Endothelial cell of umbilical vein (primary cell): ENCODE measurements at regions of chr13 and their contacts with region 1.

Region 1: DNA sequence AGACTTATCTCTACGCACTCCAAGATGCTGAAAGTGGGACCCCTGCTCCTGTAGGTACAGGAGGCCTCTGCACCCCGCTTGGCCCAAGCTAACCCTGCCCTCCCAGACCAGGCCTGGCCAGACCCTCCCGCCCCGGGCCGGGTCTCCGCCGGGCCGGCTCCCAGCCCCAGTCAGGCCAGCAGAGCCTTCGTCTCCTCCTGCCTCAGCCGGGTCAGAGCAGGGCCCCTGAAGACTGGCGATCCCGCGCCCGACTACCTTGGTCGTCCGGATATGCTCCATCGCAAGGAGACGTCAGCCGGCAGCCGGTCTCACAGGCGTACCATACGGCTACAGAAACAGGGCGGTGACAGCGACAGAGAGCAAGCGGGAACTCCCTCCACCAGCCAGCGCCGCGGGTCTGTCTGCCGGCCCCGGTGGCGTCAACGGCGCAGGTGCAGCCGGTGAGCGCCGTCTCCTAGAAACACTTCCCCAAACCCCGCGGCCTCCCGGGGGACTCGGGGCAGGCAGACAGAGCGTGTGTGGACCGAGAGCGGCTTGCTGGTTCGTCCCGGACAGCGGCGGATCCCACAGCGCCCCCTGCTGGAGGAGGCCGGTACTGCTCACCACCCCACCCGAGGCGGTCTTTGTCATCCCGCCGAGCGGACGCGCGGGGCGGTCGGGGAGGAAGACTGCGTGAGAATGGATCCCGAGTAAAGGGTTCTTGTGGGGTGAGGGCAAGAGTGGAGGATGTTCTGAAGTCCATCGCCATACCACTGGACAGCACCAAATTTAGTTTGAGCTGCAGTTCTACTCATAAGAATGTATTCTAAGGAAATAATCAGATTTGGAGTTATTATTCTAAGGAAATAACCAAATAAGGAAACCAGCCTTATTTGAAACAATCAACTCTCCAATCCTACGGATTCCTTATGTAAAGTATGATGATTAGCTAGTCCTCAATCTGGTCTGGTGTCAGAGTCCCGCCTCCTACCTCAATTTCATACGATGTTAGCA is at the start of gene MTMR6:
- DNase-seq: peak; percentile 95
- H3K4me3 ChIP-seq: peak within 1 kb of the TSS; percentile 88 to 91 (median 89)
- H3K27ac ChIP-seq: peak within 1 kb of the TSS; percentile 92
- H3K4me1 ChIP-seq: peaks cover 11% of the 10 kb centered on the region
- H3K27me3 ChIP-seq: peaks cover 21 to 26% of the 10 kb centered on the region in 2 experiments
- CTCF ChIP-seq: peak; percentile 100
- POLR2A ChIP-seq: peak; percentile 45
- total RNA-seq, gene MTMR6: 20.9 and 21.7 TPM in 2 replicates

Region 2: DNA sequence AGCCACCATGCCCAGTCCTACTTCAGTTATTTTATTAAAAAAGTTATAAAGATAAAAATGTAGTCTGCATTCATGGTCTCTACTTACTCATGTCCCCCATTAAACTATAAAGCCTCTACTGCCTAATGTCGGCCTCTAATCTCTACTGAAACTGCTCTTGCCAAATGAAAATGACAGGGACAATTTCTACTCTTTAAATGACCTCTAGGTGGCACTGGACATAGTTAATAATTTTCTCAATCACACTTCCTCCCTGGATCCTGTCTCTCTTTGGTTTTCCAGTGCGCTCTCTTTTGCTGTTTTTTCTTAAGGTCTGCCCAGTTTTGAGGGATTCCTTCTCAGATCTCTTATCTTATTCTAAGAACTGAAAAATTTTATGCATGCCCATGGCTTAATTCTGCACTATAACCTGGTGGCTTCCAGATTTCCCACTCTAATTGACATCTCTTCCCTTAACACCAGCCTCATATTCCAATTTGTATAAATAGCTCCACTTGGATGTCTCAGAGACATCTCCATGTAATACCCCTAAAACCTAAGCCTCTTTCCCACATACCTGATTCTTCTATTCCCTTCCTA is 54.2 kb before region 1 on chr13:
- CTCF ChIA-PET with region 1: interaction called, 3 read pairs
- POLR2A ChIA-PET with region 1: no interaction called
- dilution Hi-C with region 1: no loop called
- intact Hi-C with region 1: loop called (anchors 5 kb)
- DNase-seq: peak; percentile 39
- H3K4me3 ChIP-seq: no peak overlapping the region
- H3K27ac ChIP-seq: no peak overlapping the region
- H3K4me1 ChIP-seq: no peaks in the 10 kb centered on the region
- H3K27me3 ChIP-seq: peaks cover 0 to 2% of the 10 kb centered on the region in 2 experiments
- CTCF ChIP-seq: peak; percentile 32 to 43
- POLR2A ChIP-seq: no peak

Region 3: DNA sequence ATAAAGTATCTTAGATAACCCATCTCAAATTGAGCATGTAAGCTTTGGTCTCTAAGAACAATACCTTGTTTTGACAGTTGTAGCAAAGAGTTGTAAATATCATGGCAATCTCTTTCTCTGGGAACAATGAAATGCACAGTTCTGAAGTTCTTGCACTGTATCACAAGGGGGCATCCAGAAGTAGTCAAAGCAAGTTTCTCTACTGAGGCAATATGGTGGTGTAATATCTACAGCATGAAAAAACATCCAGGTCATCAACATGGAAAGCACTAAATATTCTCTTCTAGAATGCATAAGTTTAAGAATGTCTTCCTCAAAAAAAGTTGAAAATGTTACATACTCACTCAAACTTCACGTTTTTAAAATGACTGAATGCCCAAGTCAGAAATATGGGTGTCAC is 19.6 kb before region 1 on chr13:
- CTCF ChIA-PET with region 1: interaction called, 6 read pairs
- POLR2A ChIA-PET with region 1: no interaction called
- dilution Hi-C with region 1: no loop called
- intact Hi-C with region 1: loop called (anchors 1 kb)
- DNase-seq: peak; percentile 9
- H3K4me3 ChIP-seq: no peak overlapping the region
- H3K27ac ChIP-seq: no peak overlapping the region
- H3K4me1 ChIP-seq: no peaks in the 10 kb centered on the region
- H3K27me3 ChIP-seq: no peaks in the 10 kb centered on the region
- CTCF ChIP-seq: no peak
- POLR2A ChIP-seq: no peak

Region 4: DNA sequence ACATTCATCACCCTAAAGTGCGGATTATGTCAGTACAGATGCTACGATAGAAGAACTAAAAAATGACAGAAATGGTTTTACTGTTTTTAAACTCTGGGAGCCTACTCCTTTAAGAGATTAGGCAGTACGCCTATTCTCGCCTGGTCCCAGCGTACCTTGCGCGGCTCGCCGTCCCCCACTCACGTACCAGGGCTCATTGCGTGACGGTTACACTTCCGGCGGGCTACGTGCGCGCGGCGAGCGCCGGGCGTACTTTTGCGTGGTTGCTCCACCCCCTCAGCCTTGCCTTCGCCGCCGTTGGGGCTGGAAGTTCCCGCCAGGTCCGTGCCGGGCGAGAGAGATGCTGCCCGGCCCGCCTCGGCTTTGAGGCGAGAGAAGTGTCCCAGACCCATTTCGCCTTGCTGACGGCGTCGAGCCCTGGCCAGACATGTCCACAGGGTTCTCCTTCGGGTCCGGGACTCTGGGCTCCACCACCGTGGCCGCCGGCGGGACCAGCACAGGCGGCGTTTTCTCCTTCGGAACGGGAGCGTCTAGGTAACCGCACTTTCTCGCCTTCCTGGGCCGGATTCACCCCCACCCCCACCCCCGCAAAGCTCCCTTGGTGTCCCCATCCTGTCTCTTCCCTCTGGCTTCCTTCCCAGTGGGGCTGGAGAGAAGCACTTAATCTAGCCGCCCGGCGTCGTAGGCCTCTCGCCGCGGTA is 14.2 kb after region 1 on chr13 and contains the start of gene NUP58:
- CTCF ChIA-PET with region 1: interaction called, 18 read pairs
- POLR2A ChIA-PET with region 1: no interaction called
- dilution Hi-C with region 1: no loop called
- intact Hi-C with region 1: loop called (anchors 1 kb)
- DNase-seq: peak; percentile 96
- H3K4me3 ChIP-seq: peak within 1 kb of the TSS; percentile 94 to 99 (median 99)
- H3K27ac ChIP-seq: peak within 1 kb of the TSS; percentile 79
- H3K4me1 ChIP-seq: peaks cover 16% of the 10 kb centered on the region
- H3K27me3 ChIP-seq: peaks cover 8 to 22% of the 10 kb centered on the region in 2 experiments
- CTCF ChIP-seq: no peak
- POLR2A ChIP-seq: peak; percentile 70
- total RNA-seq, gene NUP58: 49.6 and 59.2 TPM in 2 replicates